BJ (cell line): ENCODE measurements at regions of chr11 and their contacts with region 1.

Region 1: DNA sequence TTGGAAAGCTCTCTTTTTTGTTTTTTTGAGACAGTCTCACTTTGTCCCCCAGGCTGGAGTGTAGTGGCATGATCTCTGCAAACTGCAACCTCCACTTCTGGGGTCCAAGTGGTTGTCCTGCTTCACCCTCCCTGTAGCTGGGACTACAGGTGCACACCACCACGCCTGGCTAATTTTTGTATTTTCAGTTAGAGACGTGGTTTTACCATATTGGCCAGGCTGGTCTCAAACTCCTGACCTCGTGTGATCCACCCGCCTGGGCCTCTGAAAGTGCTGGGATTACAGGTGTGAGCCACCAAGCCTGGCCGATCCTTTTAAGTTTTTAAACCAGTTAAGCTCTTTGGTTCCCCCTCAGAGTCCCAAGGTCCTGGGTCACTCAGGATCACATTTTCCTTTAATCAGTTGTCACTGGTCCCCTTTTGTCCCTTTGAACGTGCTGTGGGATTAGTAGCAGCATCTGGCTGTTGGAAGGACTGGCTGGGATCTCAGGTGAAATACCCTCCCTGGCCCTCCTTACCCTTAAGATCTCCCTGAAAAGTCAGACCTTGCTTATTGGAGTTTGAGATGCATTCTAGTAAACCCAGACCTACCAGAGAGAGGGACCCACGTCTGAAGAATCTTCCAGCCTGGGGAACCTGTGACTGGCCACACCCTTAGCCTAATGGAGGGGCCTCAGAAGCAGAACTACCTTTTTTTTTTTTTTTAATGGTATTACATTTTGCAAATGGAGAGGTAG is 8.1 kb downstream of the MALAT1 start:
- DNase-seq: no peak
- H3K4me3 ChIP-seq: peak overlapping the region; percentile 76
- H3K27me3 ChIP-seq: no peaks in the 10 kb centered on the region
- CTCF ChIP-seq: no peak

Region 2: DNA sequence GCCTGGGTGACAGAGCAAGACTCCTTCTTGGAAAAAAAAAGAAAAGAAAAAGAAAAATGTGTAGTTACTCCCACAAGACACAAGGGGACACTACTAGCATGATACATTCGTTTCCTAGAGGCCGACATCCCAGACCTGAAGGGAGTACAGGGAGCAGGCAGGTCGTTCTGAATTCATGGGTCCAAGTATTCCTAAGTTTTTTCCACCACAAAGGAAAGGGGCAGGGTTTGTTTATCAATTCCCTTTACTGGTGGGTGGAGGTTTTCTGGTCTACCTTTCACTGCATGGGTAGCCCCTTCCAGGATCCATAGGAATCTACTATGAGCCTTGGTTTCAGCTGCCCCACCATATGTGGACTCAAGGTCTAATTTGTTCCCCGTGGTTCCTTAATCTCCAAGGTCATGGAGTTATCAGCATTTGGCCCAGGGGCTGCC is 140.6 kb before region 1 on chr11:
- CTCF ChIA-PET with region 1: interaction called, 9 read pairs
- POLR2A ChIA-PET with region 1: interaction called, 15 read pairs
- DNase-seq: no peak
- H3K4me3 ChIP-seq: no peak overlapping the region
- H3K27me3 ChIP-seq: no peaks in the 10 kb centered on the region
- CTCF ChIP-seq: peak; percentile 74

Region 3: DNA sequence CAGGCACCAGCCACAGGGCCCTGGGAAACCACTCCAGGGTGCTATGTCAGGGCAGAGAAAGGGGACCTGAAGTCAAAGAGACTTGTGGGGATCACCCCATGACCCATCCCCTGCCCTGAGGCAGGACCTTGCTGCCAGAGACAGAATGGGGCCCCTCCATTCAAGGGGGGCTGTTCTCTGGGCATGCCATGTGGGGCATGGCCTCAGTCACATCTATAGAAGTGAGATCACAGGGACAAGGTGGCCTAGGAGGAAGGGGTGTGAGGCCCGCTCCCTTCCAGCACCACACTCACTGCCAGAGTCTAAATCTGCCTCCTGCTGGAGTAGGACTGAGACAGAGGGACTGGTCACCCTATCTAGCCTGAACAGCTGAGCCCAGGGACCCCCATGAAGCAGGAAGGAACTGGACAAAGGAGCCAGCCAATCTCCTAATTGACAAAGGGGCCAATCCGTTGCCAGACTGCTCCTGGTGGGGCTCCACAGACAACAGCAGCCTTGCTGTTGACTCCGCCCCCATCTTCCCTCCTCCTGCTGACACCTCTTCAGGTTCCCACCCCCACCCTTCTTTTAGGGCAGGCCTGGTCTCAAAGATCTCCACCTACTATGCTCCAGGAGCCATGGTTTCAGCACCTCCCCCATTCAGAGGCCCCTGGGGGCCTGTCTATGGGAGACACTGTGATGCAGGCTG is 58.4 kb before region 1 on chr11:
- CTCF ChIA-PET with region 1: interaction called, 22 read pairs
- POLR2A ChIA-PET with region 1: interaction called, 11 read pairs
- DNase-seq: no peak
- H3K4me3 ChIP-seq: no peak overlapping the region
- H3K27me3 ChIP-seq: no peaks in the 10 kb centered on the region
- CTCF ChIP-seq: no peak

Region 4: GRCh38 chr11:65454696-65455456 is 52.1 kb before region 1 on chr11:
- CTCF ChIA-PET with region 1: interaction called, 7 read pairs
- POLR2A ChIA-PET with region 1: interaction called, 11 read pairs
- DNase-seq: peak; percentile 56
- H3K4me3 ChIP-seq: peak overlapping the region; percentile 45
- H3K27me3 ChIP-seq: no peaks in the 10 kb centered on the region
- CTCF ChIP-seq: 0 out of 2 replicates have a peak, but pooled peaks have one; percentile 13

Region 5: GRCh38 chr11:65471410-65471762 is 35.6 kb before region 1 on chr11:
- CTCF ChIA-PET with region 1: interaction called, 6 read pairs
- POLR2A ChIA-PET with region 1: interaction called, 16 read pairs
- DNase-seq: no peak
- H3K4me3 ChIP-seq: peak overlapping the region; percentile 15
- H3K27me3 ChIP-seq: no peaks in the 10 kb centered on the region
- CTCF ChIP-seq: peak; percentile 58

Region 6: GRCh38 chr11:65477149-65477965 is 29.6 kb before region 1 on chr11:
- CTCF ChIA-PET with region 1: interaction called, 13 read pairs
- POLR2A ChIA-PET with region 1: interaction called, 36 read pairs
- DNase-seq: no peak
- H3K4me3 ChIP-seq: peak overlapping the region; percentile 79
- H3K27me3 ChIP-seq: no peaks in the 10 kb centered on the region
- CTCF ChIP-seq: no peak

Region 7: DNA sequence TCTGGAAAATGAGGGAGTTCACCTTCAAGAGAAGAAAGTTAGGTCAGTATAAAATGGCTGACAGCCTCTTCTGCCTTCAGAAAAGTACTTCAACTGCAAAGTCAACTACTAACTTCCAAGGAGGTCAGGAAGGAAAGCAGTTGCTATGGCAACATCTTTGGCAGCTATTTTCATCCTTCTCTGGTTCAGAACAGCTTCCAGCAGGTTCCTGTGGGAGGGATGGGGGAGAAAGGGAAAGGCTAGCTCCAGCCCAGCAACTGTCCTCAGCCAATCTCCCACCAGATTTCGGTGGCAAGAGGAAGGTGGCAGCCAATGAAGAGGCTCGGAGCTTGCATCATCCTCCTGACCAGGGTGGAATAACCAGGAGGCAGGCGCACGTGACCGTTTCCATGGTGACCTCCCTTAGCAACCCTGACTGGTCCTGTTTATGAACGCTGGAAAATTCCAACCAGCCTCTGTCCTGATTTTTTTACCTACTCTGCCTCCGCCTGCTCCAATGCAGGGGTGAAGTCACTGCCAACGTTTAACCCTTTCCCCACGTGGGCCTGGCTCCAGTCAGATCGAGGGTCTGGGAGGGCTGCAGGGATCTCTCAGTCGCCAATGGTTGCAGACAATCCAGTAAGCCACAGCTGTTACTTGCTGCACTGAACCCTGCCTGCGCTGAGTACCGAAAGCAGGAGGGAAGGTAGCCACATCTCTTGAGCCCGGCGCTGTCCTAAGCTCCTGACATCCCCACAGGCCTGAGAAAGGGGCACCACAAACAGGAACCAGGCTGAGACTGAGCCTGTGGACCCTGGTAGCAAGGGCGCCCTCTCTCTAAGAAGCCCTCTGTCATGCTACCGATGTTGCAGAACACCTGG is 19.3 kb before region 1 on chr11:
- CTCF ChIA-PET with region 1: interaction called, 8 read pairs
- POLR2A ChIA-PET with region 1: interaction called, 80 read pairs
- DNase-seq: peak; percentile 100
- H3K4me3 ChIP-seq: 0 out of 2 replicates have a peak overlapping the region, but pooled peaks have one; percentile 10
- H3K27me3 ChIP-seq: no peaks in the 10 kb centered on the region
- CTCF ChIP-seq: no peak